ENCODE measurements at regions of chr15 and their contacts with region 1.

Region 1: DNA sequence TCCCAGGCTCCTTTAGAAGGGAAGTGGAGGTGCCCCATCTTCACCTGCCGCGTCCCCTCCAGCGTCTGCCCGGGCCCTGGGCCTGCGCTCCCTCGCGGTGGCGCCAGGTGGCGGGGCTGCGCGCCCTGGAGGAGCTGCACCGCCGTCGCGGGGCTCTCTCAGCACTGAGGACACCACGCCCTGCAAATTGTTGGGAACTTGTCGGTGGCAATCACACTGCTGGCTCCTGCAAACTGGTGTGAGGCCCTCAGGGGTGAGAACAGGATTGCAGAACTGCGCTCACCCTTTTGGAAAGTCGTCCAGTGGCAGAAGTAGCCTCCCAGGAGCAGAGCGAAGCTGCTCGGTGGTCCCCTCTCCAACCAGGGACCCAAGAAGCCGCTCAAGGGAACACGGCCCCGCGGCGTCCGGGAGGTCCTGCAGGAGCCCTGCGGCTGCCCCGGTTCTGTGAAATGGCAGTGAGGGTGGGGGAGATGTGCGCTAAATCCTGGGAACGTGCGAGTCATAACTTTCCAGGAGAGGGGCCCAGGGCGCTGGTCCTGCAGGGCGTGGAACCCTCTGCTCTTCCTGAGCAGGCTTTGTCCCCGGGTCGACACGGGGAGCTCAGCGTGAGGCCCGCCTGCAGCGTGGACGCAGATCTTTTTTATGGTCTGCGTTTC is 995 bp upstream of the LRRK1 start:
- DNase-seq: peak; percentile 36 to 89
- H3K4me3 ChIP-seq: peak overlapping the region; percentile 75 to 99
- H3K27ac ChIP-seq: peak overlapping the region; percentile 66 to 68
- H3K4me1 ChIP-seq: peaks cover 0 to 3% of the 10 kb centered on the region in 2 donors
- H3K27me3 ChIP-seq: no peaks in the 10 kb centered on the region
- CTCF ChIP-seq: peak; percentile 87 to 97 (median 94)

Region 2: DNA sequence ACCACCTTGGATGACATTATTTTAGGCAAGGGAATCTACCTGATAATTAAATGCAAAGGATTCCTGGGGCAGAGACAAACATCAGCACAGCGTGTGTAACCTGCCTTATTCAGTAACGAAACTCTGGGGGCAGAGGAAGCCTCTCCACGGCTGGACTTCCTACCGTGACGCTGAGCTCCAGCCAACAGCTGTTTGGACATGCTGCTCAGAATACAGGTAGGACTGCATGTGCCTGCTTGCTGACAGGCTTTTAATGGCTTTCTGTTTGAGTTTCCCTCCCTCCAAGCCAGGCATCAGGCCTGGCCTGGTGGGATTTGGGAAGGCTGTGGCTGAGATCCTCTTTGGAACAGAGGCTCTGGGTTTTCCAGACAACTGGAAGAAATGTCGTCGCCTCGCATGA is 727.0 kb before region 1 on chr15:
- intact Hi-C with region 1: no loop called
- DNase-seq: peak in 1 of 2 donors; percentile 19
- H3K4me3 ChIP-seq: no peak overlapping the region
- H3K27ac ChIP-seq: no peak overlapping the region
- H3K4me1 ChIP-seq: no peaks in the 10 kb centered on the region
- H3K27me3 ChIP-seq: no peaks in the 10 kb centered on the region
- CTCF ChIP-seq: no peak

Region 3: GRCh38 chr15:101006934-101007691 is 89.0 kb after region 1 on chr15:
- intact Hi-C with region 1: loop called (anchors 1 kb)
- DNase-seq: peak; percentile 25 to 88
- H3K4me3 ChIP-seq: peak overlapping the region; percentile 40 to 65
- H3K27ac ChIP-seq: peak overlapping the region; percentile 7 to 51
- H3K4me1 ChIP-seq: peaks cover 3 to 5% of the 10 kb centered on the region in 2 donors
- H3K27me3 ChIP-seq: no peaks in the 10 kb centered on the region
- CTCF ChIP-seq: peak; percentile 71 to 92 (median 80)

Region 4: GRCh38 chr15:101258238-101259144 is 340.3 kb after region 1 on chr15:
- intact Hi-C with region 1: loop called (anchors 5 kb)
- DNase-seq: no peak
- H3K4me3 ChIP-seq: no peak overlapping the region
- H3K27ac ChIP-seq: no peak overlapping the region
- H3K4me1 ChIP-seq: no peaks in the 10 kb centered on the region
- H3K27me3 ChIP-seq: no peaks in the 10 kb centered on the region
- CTCF ChIP-seq: peak; percentile 74 to 84 (median 77)

Region 5: GRCh38 chr15:101277038-101277882 is 359.1 kb after region 1 on chr15 and contains the start of gene SELENOS:
- intact Hi-C with region 1: loop called (anchors 5 kb)
- DNase-seq: peak; percentile 52 to 93
- H3K4me3 ChIP-seq: peak within 1 kb of the TSS; percentile 67 to 90
- H3K27ac ChIP-seq: peak within 1 kb of the TSS; percentile 89 to 93
- H3K4me1 ChIP-seq: peaks cover 0 to 14% of the 10 kb centered on the region in 2 donors
- H3K27me3 ChIP-seq: no peaks in the 10 kb centered on the region
- CTCF ChIP-seq: no peak
- total RNA-seq, gene SELENOS: 32.0 TPM

Measured in ascending aorta (tissue), 2 donors.